HEK293 (cell line): ENCODE measurements at regions of chr2 and their contacts with region 1.

Region 1: DNA sequence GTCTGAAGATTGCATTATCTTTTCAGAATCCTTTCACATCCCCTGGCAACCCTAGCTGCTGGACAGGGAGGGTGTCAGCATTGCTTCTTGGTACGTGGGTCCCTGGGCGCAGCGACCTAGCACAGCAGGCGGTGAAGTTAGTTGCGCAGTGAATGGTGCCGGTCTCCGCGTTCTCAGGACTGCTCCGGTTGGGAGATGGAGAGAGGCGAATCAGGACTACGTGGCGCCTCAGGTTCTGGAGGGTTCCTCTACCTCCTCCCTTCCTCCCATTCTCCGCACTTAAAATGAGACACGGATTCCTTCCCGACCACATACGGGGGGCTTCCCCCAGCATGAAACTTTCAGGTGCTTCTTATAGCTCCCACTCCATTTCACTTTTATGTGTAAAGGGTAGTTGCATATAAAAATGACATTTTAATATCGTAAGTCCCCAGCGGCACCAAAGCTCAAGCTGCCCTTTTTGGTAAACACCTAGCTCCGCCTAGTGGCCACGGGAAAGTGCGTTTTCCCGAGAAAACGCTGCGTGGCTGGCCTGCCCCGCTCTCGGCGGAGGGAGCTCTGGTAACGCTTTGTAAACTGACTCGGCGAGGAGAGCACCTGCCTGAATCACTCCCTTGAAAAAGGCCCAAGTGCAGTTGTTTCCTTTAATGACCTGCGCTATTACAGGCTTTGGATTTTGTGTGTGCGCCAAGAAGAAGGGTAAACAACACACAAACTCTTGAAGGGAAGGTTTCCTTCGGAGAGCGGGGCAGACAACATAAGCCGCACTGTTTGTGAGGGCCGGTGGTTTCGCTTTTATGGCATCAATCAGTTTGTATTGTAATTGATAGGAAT is 32.9 kb upstream of the INHBB start:
- H3K4me3 ChIP-seq: peak overlapping the region; percentile 20
- H3K27ac ChIP-seq: no peak overlapping the region
- H3K4me1 ChIP-seq: no peaks in the 10 kb centered on the region
- CTCF ChIP-seq: peak; percentile 86

Region 2: GRCh38 chr2:119641562-119642258 is 671.4 kb before region 1 on chr2:
- CTCF ChIA-PET with region 1: interaction called, 12 read pairs
- POLR2A ChIA-PET with region 1: no interaction called
- H3K4me3 ChIP-seq: no peak overlapping the region
- H3K27ac ChIP-seq: no peak overlapping the region
- H3K4me1 ChIP-seq: no peaks in the 10 kb centered on the region
- CTCF ChIP-seq: peak; percentile 91

Region 3: DNA sequence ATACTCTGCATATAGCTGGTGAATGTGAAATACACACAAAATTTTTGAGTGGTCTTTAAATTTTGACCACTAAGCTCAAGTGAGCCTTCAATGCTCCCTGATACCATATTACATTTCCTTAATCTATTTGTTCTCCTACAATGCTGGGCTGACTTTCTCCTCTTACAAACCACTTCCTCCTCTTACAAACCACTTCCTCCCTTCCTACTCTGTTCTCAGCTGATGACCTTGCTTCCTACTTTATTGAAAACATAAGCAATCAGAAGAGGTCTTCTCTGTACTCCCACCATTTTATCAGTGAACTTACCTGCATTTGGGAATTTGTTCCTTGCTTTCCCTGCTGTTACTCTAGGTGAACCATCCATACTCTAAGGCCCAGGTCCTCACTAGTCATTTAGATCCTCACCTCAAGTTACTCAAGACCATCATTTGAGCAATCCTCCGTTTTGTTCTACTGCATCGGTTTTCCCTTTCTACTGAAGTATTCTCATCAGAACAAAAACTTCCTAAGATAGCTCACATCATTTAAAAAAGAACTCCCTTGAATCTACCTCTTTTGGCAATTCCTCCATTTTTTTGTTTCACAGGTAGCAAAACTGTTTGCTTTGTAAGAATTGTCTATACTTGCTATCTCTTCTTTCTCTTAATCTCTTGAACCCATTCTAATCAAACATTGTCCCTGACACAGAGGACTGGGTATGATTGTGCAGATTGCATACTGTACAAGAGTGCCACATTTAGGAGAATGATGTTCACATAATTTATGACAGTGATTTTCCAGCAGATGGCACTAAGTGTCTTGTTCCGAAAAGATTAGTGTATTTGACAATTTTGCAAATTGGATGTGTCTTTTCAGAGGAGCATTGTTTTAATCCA is 203.7 kb before region 1 on chr2:
- CTCF ChIA-PET with region 1: interaction called, 13 read pairs
- POLR2A ChIA-PET with region 1: no interaction called
- H3K4me3 ChIP-seq: no peak overlapping the region
- H3K27ac ChIP-seq: no peak overlapping the region
- H3K4me1 ChIP-seq: peaks cover 16% of the 10 kb centered on the region
- CTCF ChIP-seq: peak; percentile 38; the same call in 1 of the 2 replicates

Region 4: GRCh38 chr2:120252225-120253021 is 60.7 kb before region 1 on chr2 and contains the start of gene RALB:
- CTCF ChIA-PET with region 1: interaction called, 13 read pairs
- POLR2A ChIA-PET with region 1: interaction called, 4 read pairs
- H3K4me3 ChIP-seq: peak within 1 kb of the TSS; percentile 63
- H3K27ac ChIP-seq: peak within 1 kb of the TSS; percentile 59; the same call in 1 of the 2 replicates
- H3K4me1 ChIP-seq: peaks cover 2% of the 10 kb centered on the region; the same call in 1 of the 2 replicates
- CTCF ChIP-seq: 0 out of 2 replicates have a peak, but pooled peaks have one; percentile 30

Region 5: GRCh38 chr2:120323214-120323613 is 10.1 kb after region 1 on chr2:
- CTCF ChIA-PET with region 1: interaction called, 14 read pairs
- POLR2A ChIA-PET with region 1: no interaction called
- H3K4me3 ChIP-seq: no peak overlapping the region
- H3K27ac ChIP-seq: no peak overlapping the region
- H3K4me1 ChIP-seq: no peaks in the 10 kb centered on the region
- CTCF ChIP-seq: no peak

Region 6: DNA sequence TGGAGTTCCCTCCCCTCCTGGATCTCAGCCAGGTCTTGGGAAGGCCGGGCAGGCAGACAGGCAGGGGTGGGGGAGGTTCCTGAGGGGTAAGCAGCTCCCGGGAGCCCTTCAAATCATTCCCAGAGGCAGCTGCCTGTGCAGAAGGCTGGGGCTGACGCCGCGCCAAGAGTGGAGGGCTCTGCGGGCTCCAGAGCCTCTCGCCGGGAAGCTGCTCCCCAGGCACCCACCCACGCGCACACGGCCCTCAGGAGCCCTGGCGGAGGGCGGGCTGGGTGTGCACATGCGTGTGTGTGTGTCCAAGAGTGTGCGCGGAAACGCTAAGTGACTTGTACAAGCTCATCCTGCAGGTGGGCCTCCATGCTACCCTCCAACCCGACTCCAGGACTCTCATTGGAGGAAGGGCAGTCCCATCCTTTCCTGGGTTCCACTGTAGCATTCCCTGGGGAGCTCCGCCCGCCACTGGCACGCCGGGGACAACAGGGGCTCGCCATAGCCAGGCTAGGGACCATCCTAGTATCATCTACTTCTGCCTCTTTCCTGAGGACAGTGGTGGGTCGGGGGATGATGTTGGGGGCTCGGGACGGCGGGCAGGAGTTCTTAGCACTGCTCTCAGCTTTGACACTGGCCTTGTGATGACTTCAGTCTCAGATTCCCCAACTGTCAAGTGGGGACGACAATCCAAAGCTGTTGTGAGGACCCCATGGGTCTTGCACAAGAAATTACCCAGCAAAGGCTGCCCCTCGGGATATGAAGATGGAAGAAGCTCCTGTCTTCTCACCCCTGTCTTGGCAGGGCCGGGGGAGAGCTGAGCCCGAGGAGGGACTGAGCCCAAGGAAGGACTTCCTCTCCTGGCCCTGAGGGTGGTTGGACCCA is 83.2 kb after region 1 on chr2:
- CTCF ChIA-PET with region 1: no interaction called
- POLR2A ChIA-PET with region 1: no interaction called
- H3K4me3 ChIP-seq: no peak overlapping the region
- H3K27ac ChIP-seq: no peak overlapping the region
- H3K4me1 ChIP-seq: peaks cover 5% of the 10 kb centered on the region; the same call in 1 of the 2 replicates
- CTCF ChIP-seq: no peak

Region 7: GRCh38 chr2:120522151-120522751 is 209.2 kb after region 1 on chr2:
- CTCF ChIA-PET with region 1: no interaction called
- POLR2A ChIA-PET with region 1: no interaction called
- H3K4me3 ChIP-seq: no peak overlapping the region
- H3K27ac ChIP-seq: no peak overlapping the region
- H3K4me1 ChIP-seq: no peaks in the 10 kb centered on the region
- CTCF ChIP-seq: no peak

Region 8: GRCh38 chr2:120589771-120590608 is 276.9 kb after region 1 on chr2:
- CTCF ChIA-PET with region 1: no interaction called
- POLR2A ChIA-PET with region 1: no interaction called
- H3K4me3 ChIP-seq: no peak overlapping the region
- H3K27ac ChIP-seq: no peak overlapping the region
- H3K4me1 ChIP-seq: no peaks in the 10 kb centered on the region
- CTCF ChIP-seq: no peak